SK-N-SH (cell line): ENCODE measurements at regions of chr2 and their contacts with region 1.

Region 1: DNA sequence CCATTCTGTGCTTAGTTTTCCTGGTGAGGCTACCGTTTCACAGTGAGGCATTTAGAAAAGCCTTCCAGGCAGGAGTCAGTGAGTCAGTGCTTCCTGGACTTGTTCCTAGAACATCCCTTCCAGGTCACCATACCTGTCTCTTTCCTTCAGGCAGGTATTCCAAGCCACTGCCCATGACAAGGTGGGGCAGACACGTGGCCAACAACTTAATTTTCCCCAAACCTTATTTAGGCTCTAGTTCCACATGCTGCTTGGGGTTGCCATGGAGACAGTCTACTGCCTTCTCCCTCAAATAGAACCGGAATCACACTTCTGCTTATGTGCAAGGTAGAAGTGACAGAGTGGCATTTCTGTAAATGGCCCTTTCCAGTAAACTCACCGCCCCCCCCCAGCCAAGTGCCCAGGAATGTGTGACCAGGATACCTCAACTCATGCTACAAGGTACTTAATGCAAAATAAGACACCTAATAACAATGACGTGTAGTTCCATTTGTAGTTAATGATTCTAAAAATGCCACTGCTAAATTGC is 258.3 kb downstream of the PRKCE start:
- DNase-seq: no peak
- H3K4me3 ChIP-seq: no peak overlapping the region
- H3K27ac ChIP-seq: no peak overlapping the region
- H3K4me1 ChIP-seq: peaks cover 4 to 6% of the 10 kb centered on the region in 2 experiments; a peak in 1 of 4 replicates
- H3K27me3 ChIP-seq: no peaks in the 10 kb centered on the region
- CTCF ChIP-seq: no peak
- EP300 ChIP-seq: no peak
- RAD21 ChIP-seq: no peak

Region 2: DNA sequence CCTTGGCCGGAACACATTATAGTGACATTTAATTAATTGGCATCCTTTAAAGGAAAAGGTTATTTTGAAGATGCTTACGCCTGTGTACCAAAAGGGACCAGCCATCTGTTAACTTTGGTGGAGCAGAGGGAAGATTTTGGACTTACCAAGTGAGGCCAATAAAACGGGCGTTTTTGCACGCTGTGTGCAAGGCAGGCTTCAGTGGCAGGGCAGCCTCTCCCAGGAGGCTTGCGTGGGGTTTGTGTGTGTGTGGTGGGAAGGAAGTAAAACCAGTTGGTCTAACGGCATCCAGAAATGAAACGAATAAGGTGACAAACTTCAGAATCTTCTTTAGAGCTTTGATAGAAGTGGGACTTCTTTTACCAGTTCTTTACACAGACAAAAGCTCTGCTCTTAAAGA is 66.6 kb before region 1 on chr2:
- CTCF ChIA-PET with region 1: no interaction called
- POLR2A ChIA-PET with region 1: no interaction called
- DNase-seq: no peak
- H3K4me3 ChIP-seq: no peak overlapping the region
- H3K27ac ChIP-seq: no peak overlapping the region
- H3K4me1 ChIP-seq: peaks cover 20 to 55% of the 10 kb centered on the region in 2 experiments
- H3K27me3 ChIP-seq: no peaks in the 10 kb centered on the region
- CTCF ChIP-seq: no peak
- EP300 ChIP-seq: no peak
- RAD21 ChIP-seq: no peak

Region 3: GRCh38 chr2:45889053-45889452 is 20.7 kb before region 1 on chr2:
- CTCF ChIA-PET with region 1: interaction called, 10 read pairs
- POLR2A ChIA-PET with region 1: no interaction called
- DNase-seq: no peak
- H3K4me3 ChIP-seq: no peak overlapping the region
- H3K27ac ChIP-seq: no peak overlapping the region
- H3K4me1 ChIP-seq: peaks cover 9 to 44% of the 10 kb centered on the region in 2 experiments; a peak in 2 of 4 replicates
- H3K27me3 ChIP-seq: no peaks in the 10 kb centered on the region
- CTCF ChIP-seq: no peak; the same call in 1 of the 2 replicates
- EP300 ChIP-seq: no peak
- RAD21 ChIP-seq: no peak